Activated CD8-positive, alpha-beta T cell treated with anti-CD3 and anti-CD28 coated beads, Interleukin-2, amount 10 ng/mL, durations not matched to agents 7 days and 5 days (primary cell): ENCODE measurements at regions of chr1 and their contacts with region 1.

Region 1: GRCh38 chr1:212355230-212355969 is 59.3 kb downstream of the PACC1 start:
- DNase-seq: no peak
- ATAC-seq: no peak
- H3K4me3 Mint-ChIP-seq: no peak overlapping the region
- H3K27ac Mint-ChIP-seq: no peak overlapping the region
- H3K4me1 Mint-ChIP-seq: peaks cover 14% of the 10 kb centered on the region
- H3K27me3 Mint-ChIP-seq: no peaks in the 10 kb centered on the region

Region 2: DNA sequence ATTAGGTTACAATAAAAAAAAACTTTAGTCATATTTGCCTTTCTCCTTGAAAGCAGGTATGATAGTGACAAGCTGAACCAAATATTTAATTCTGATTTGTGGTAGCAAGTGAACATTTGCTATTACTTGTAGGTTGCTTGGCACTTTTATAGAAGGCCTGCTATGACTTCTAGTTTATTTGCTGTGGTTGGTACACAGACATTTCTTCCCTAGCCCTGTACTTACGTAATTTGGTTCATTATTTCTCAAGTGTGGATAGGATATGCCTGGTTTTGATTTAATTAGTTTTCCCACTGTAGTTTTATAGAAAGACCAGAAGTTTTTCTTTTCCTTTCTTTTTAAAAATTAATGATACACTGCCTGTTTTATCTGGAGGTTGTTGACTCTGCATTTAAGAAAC is 14.3 kb before region 1 on chr1:
- CTCF ChIA-PET with region 1: no interaction called
- POLR2A ChIA-PET with region 1: no interaction called
- DNase-seq: no peak
- ATAC-seq: no peak
- H3K4me3 Mint-ChIP-seq: no peak overlapping the region
- H3K27ac Mint-ChIP-seq: no peak overlapping the region
- H3K4me1 Mint-ChIP-seq: no peaks in the 10 kb centered on the region
- H3K27me3 Mint-ChIP-seq: no peaks in the 10 kb centered on the region

Region 3: DNA sequence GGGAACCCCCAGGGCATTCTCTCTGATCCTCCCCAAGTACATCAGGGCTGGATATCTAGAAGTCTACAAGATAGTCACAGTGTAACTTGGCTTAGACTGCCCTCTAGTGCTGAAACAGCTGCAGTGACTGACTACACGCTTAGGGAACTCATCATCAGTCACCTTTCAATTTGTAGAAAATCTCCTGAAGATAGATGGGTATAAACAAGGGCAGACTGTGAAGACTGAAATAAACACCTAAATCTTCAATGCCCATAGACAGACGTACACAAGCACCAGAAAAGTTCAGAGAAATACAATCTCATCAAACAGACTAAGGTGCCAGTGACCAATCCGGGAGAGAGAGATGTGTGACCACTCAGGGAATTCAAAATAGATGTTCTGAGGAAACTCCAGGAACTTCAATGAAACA is 12.7 kb after region 1 on chr1:
- CTCF ChIA-PET with region 1: interaction called, 12 read pairs
- POLR2A ChIA-PET with region 1: no interaction called
- DNase-seq: peak; percentile 76
- ATAC-seq: peak; percentile 92
- H3K4me3 Mint-ChIP-seq: no peak overlapping the region
- H3K27ac Mint-ChIP-seq: no peak overlapping the region
- H3K4me1 Mint-ChIP-seq: no peaks in the 10 kb centered on the region
- H3K27me3 Mint-ChIP-seq: no peaks in the 10 kb centered on the region

Region 4: GRCh38 chr1:212401838-212402582 is 46.6 kb after region 1 on chr1:
- CTCF ChIA-PET with region 1: no interaction called
- POLR2A ChIA-PET with region 1: no interaction called
- DNase-seq: no peak
- ATAC-seq: no peak
- H3K4me3 Mint-ChIP-seq: no peak overlapping the region
- H3K27ac Mint-ChIP-seq: no peak overlapping the region
- H3K4me1 Mint-ChIP-seq: no peaks in the 10 kb centered on the region
- H3K27me3 Mint-ChIP-seq: no peaks in the 10 kb centered on the region